Brain microvascular endothelial cell (primary cell): ENCODE measurements at regions of chr1 and their contacts with region 1.

Region 1: DNA sequence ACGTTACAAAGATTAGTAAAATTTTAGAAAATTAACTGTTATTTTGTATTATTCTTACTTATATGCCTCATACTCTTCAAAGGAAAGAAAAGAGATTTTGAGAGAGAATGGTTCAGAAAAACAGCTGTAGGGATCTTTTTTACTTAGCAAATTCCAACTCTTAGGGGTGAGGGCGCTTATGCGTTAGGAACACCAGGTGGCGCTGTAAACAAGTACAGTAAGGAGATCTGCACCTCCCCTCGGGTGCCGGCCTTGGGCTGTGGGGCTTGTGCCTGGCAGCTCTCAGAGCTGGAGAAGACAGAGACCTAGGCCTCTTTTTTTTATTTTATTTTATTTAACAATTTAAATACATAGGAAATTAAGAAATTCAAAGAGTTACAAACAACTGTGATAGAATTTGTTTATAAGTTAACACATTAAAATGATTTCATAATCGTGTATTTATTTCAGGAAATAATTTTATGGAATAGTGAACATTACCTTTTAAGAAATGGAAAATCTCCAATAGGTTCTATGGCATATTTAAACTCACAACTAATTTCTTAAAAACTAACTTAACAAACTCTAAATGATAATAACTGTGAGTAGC is 32.6 kb downstream of the UTP25 start:
- DNase-seq: peak; percentile 80
- H3K4me3 ChIP-seq: no peak overlapping the region
- H3K27ac ChIP-seq: no peak overlapping the region
- H3K27me3 ChIP-seq: no peaks in the 10 kb centered on the region
- CTCF ChIP-seq: peak; percentile 92

Region 2: GRCh38 chr1:209989525-209989924 is 129.1 kb after region 1 on chr1:
- in situ Hi-C with region 1: loop called (anchors 10 kb)
- DNase-seq: no peak
- H3K4me3 ChIP-seq: no peak overlapping the region
- H3K27ac ChIP-seq: no peak overlapping the region
- H3K27me3 ChIP-seq: no peaks in the 10 kb centered on the region
- CTCF ChIP-seq: no peak